Activated CD4-positive, alpha-beta memory T cell treated with anti-CD3 and anti-CD28 coated beads, Interleukin-2, amount 10 ng/mL, durations not matched to agents 7 days and 5 days (primary cell): ENCODE measurements at regions of chr6 and their contacts with region 1.

Region 1: DNA sequence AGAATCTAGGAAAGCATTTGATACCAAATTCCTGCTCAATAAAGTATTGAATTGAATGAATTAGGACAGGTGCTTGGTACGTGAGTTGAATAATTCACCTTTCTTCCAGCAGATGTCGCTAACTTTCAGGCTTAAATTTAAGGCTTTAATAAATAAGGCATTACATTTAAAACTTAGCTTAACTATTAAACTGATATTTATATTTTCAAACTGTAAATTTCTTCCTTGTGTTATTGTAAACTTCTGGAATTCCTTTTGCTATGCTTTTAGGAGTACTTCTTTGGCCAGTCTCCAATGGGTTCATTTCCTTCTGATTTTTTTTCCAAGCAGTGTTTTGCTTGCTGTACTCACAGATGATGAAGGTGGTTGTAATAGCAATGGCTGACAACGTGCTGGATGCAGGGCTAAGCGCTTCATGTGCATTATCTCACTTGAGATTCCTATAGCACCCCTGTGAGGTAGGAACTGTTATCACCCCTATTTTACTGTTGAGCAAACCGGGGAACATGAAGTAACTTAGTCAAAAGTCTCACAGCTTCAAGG is 71.3 kb upstream of the SLC2A12 start:
- DNase-seq: no peak
- H3K4me3 Mint-ChIP-seq: no peak overlapping the region
- H3K27ac Mint-ChIP-seq: no peak overlapping the region
- H3K4me1 Mint-ChIP-seq: no peaks in the 10 kb centered on the region
- H3K27me3 Mint-ChIP-seq: peaks cover 6% of the 10 kb centered on the region

Region 2: GRCh38 chr6:134103006-134103405 is 20.7 kb before region 1 on chr6:
- CTCF ChIA-PET with region 1: interaction called, 34 read pairs
- POLR2A ChIA-PET with region 1: no interaction called
- DNase-seq: no peak
- H3K4me3 Mint-ChIP-seq: no peak overlapping the region
- H3K27ac Mint-ChIP-seq: no peak overlapping the region
- H3K4me1 Mint-ChIP-seq: no peaks in the 10 kb centered on the region
- H3K27me3 Mint-ChIP-seq: peaks cover 33% of the 10 kb centered on the region

Region 3: GRCh38 chr6:134111062-134111677 is 12.6 kb before region 1 on chr6:
- CTCF ChIA-PET with region 1: interaction called, 34 read pairs
- POLR2A ChIA-PET with region 1: no interaction called
- DNase-seq: peak; percentile 52
- H3K4me3 Mint-ChIP-seq: no peak overlapping the region
- H3K27ac Mint-ChIP-seq: no peak overlapping the region
- H3K4me1 Mint-ChIP-seq: peaks cover 7% of the 10 kb centered on the region
- H3K27me3 Mint-ChIP-seq: peaks cover 20% of the 10 kb centered on the region

Region 4: GRCh38 chr6:134272374-134272773 is 148.6 kb after region 1 on chr6:
- CTCF ChIA-PET with region 1: no interaction called
- POLR2A ChIA-PET with region 1: no interaction called
- DNase-seq: peak; percentile 22
- H3K4me3 Mint-ChIP-seq: no peak overlapping the region
- H3K27ac Mint-ChIP-seq: peak overlapping the region; percentile 47
- H3K4me1 Mint-ChIP-seq: peaks cover 31% of the 10 kb centered on the region
- H3K27me3 Mint-ChIP-seq: no peaks in the 10 kb centered on the region

Region 5: GRCh38 chr6:134822920-134823709 is 699.4 kb after region 1 on chr6:
- CTCF ChIA-PET with region 1: interaction called, 13 read pairs
- POLR2A ChIA-PET with region 1: no interaction called
- DNase-seq: peak; percentile 31
- H3K4me3 Mint-ChIP-seq: no peak overlapping the region
- H3K27ac Mint-ChIP-seq: no peak overlapping the region
- H3K4me1 Mint-ChIP-seq: peaks cover 3% of the 10 kb centered on the region
- H3K27me3 Mint-ChIP-seq: peaks cover 5% of the 10 kb centered on the region